Ovary (tissue), 10 donors: ENCODE measurements at regions of chr7 and their contacts with region 1.

Region 1: DNA sequence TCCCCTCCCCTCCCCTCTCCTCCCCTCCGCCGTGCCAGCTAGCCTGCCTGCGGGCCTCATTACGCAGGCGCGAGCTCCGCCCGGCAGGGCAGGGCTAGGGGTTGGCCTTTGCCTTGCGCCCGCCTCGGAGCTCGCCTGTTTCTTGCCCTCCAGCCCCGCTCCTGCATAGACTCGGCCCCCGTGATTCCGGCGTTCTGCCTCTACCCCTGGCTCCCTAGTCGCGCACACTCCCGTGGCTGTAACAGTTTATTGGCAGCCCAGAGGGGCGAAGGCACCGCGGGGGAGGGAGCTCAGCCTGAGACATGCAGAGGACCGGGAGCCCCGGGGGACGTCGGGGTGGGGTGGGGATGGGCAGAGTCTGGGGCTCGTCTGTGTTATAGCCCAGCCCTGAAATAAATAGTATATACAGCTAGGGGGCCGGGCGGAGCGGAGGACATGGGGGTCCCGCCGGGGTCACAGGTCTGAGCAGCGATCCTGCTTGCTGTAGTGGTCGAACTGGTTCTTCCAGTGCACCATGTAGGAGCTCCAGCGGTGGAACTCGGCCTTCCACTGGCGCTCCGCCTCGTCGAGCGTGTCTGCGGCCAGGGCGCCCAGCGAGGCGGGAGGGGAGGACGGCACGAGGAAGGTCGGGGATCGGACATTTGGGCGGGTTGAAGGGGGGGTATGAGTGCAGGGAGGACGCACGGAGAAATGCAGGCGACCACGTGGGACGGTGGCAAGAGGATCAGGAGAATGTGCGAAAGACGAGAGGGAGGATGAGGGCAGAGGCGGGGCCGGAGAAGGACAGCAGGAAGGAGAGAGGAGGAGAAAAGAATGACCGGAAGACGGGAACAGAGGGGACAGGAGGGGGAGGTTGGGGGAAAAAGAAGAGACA is 483 bp upstream of the UFSP1 start:
- DNase-seq: peak; percentile 91 to 94 (median 93)
- H3K4me3 ChIP-seq: peak overlapping the region; percentile 64
- H3K27ac ChIP-seq: peak overlapping the region; percentile 18 to 67
- H3K4me1 ChIP-seq: peaks cover 4% of the 10 kb centered on the region
- H3K27me3 ChIP-seq: no peaks in the 10 kb centered on the region
- CTCF ChIP-seq: peak in 1 of 3 donors; percentile 21
- EP300 ChIP-seq: no peak
- POLR2A ChIP-seq: peak; percentile 58

Region 2: DNA sequence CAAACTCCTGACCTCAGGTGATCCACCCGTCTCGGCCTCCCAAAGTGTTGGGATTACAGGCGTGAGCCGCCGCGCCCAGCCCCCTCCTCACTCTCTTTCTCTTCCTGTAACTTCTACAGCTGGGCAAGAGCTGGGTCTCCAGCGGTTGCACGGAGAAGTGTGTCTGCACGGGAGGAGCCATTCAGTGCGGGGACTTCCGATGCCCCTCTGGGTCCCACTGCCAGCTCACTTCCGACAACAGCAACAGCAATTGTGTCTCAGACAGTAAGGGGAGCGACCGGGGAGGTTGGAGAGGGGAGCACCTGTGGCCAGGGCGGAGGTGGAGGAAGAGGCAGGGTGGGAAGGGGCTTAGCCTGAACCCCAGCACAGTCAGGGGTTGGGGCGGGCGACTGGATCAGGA is 104.1 kb before region 1 on chr7:
- intact Hi-C with region 1: no loop called
- DNase-seq: no peak
- H3K4me3 ChIP-seq: no peak overlapping the region
- H3K27ac ChIP-seq: no peak overlapping the region
- H3K4me1 ChIP-seq: no peaks in the 10 kb centered on the region
- H3K27me3 ChIP-seq: no peaks in the 10 kb centered on the region
- CTCF ChIP-seq: no peak
- EP300 ChIP-seq: no peak
- POLR2A ChIP-seq: no peak

Region 3: GRCh38 chr7:100929780-100930135 is 39.8 kb after region 1 on chr7:
- intact Hi-C with region 1: no loop called
- DNase-seq: no peak
- H3K4me3 ChIP-seq: no peak overlapping the region
- H3K27ac ChIP-seq: no peak overlapping the region
- H3K4me1 ChIP-seq: no peaks in the 10 kb centered on the region
- H3K27me3 ChIP-seq: no peaks in the 10 kb centered on the region
- CTCF ChIP-seq: no peak
- EP300 ChIP-seq: no peak
- POLR2A ChIP-seq: no peak

Region 4: GRCh38 chr7:101058355-101058754 is 168.4 kb after region 1 on chr7:
- intact Hi-C with region 1: loop called in 2 of 4 experiments (anchors 5 kb)
- DNase-seq: peak; percentile 48 to 77 (median 73)
- H3K4me3 ChIP-seq: no peak overlapping the region
- H3K27ac ChIP-seq: no peak overlapping the region
- H3K4me1 ChIP-seq: no peaks in the 10 kb centered on the region
- H3K27me3 ChIP-seq: no peaks in the 10 kb centered on the region
- CTCF ChIP-seq: no peak
- EP300 ChIP-seq: no peak
- POLR2A ChIP-seq: no peak

Region 5: DNA sequence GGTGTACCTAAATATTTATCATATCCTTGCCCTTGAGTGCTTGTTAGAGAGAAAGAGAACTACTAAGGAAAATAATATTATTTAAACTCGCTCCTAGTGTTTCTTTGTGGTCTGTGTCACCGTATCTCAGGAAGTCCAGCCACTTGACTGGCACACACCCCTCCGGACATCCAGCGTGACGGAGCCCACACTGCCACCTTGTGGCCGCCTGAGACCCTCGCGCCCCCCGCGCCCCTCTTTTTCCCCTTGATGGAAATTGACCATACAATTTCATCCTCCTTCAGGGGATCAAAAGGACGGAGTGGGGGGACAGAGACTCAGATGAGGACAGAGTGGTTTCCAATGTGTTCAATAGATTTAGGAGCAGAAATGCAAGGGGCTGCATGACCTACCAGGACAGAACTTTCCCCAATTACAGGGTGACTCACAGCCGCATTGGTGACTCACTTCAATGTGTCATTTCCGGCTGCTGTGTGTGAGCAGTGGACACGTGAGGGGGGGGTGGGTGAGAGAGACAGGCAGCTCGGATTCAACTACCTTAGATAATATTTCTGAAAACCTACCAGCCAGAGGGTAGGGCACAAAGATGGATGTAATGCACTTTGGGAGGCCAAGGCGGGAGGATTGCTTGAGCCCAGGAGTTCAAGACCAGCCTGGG is 248.3 kb after region 1 on chr7:
- intact Hi-C with region 1: loop called in 1 of 4 experiments (anchors 10 kb)
- DNase-seq: peak; percentile 70 to 92 (median 78)
- H3K4me3 ChIP-seq: no peak overlapping the region
- H3K27ac ChIP-seq: peak overlapping the region in 1 of 2 donors; percentile 29
- H3K4me1 ChIP-seq: peaks cover 1% of the 10 kb centered on the region
- H3K27me3 ChIP-seq: no peaks in the 10 kb centered on the region
- CTCF ChIP-seq: peak; percentile 46 to 90 (median 86)
- EP300 ChIP-seq: no peak
- POLR2A ChIP-seq: no peak

Region 6: DNA sequence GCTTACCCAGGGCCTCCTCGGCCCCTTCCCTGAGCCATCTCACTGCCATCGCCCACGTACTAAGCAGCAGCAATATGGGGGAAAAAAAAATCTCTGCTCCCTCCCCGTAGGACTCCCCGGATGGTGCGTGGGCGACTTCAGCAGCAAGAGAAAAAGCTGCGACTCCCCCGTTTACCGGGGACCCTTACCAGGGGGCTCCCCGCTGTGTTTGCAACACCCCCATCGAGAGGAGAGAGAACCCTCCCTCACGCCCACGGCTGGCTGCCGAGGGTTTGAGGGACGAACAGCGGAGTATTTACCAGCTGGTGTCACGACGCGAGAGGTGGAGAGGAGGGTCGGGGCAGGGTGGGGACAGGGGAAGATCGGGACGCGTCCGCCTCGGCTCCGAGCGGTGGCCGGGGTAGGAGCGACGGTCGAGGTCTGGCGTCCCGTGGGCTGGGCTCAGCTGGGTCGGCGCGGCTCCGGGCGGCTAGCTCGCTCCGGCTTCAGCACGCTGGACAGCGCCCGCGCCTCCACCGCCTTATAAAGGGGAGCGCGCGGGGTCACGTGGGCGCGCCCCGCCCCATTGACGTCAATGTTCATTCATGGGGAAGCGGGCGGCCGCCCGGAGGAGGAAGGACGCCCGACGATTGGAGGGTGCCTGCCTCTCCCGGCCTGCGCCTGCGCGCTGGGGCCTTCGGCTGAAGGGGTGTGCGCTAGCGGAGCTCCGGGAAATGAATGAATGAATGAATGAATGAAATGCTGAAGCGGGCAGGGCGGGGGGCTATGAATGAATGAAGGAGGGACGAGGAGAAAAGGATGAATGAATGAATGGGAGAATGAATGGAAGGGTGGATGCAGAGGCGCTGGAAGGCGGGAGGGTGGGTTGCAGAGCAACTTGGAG is 275.3 kb after region 1 on chr7 and contains the start of gene VGF:
- intact Hi-C with region 1: loop called in 1 of 4 experiments (anchors 10 kb)
- DNase-seq: peak; percentile 78 to 93 (median 88)
- H3K4me3 ChIP-seq: no peak within 1 kb of the TSS
- H3K27ac ChIP-seq: no peak within 1 kb of the TSS
- H3K4me1 ChIP-seq: peaks cover 15% of the 10 kb centered on the region
- H3K27me3 ChIP-seq: peaks cover 2% of the 10 kb centered on the region
- CTCF ChIP-seq: no peak
- EP300 ChIP-seq: no peak
- POLR2A ChIP-seq: no peak
- total RNA-seq, gene VGF: 0.20 TPM in 1 of 7 donors, not detected in the others

Region 7: GRCh38 chr7:101287032-101287431 is 397.0 kb after region 1 on chr7:
- intact Hi-C with region 1: loop called in 2 of 4 experiments (anchors 10 kb)
- DNase-seq: no peak
- H3K4me3 ChIP-seq: no peak overlapping the region
- H3K27ac ChIP-seq: no peak overlapping the region
- H3K4me1 ChIP-seq: peaks cover 2% of the 10 kb centered on the region
- H3K27me3 ChIP-seq: no peaks in the 10 kb centered on the region
- CTCF ChIP-seq: no peak
- EP300 ChIP-seq: no peak
- POLR2A ChIP-seq: no peak

Region 8: DNA sequence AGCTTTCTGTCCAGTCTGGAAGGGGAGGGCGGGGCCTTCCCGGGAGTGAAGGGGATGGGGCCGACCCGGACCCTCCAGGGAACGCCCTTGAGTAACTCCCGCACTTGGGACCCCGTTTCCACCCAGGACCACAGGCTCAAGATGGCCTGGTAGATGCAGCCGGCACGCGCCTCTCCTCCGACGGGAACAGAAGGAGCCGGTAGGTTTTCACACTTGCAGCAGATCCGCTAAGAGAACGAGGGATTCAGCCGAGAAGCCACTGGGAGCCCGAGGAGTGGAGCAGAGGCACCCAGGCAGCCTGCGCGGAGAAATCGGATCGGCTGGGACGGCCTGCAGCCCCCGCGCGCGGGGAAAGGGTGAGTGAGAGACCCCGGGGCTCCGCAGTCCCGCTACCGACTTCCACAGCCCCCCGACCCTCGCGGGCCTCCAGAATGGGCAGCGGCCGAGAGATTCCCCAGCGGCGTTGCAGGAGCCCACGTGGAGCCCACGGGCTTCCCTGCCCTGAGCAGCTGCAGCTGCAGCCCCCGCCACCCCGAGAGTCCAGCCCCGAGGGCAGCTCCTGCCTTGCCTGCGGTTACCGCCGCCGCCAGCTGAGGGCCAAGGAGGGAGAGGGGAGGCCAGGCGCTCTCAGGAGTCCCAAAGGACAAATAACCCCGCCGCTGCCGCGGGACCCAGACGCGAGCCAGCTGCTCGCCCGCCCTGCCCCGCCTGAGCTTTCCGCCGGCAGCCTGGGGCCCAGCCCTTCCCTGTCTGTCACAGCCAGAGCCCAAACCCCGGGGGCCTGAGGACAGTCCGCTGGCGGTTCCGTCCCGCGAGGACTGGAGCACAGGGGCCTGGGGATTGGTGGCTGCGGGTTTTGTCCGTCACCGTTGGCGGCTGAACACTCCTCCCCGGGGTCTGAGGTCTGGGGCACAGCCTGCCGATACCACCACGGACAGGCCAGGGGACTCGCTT is 409.8 kb after region 1 on chr7:
- intact Hi-C with region 1: loop called in 1 of 4 experiments (anchors 10 kb)
- DNase-seq: no peak
- H3K4me3 ChIP-seq: no peak overlapping the region
- H3K27ac ChIP-seq: no peak overlapping the region
- H3K4me1 ChIP-seq: no peaks in the 10 kb centered on the region
- H3K27me3 ChIP-seq: peaks cover 5% of the 10 kb centered on the region
- CTCF ChIP-seq: no peak
- EP300 ChIP-seq: no peak
- POLR2A ChIP-seq: no peak

Region 9: GRCh38 chr7:101519324-101520023 is 629.5 kb after region 1 on chr7:
- intact Hi-C with region 1: no loop called
- DNase-seq: no peak
- H3K4me3 ChIP-seq: no peak overlapping the region
- H3K27ac ChIP-seq: no peak overlapping the region
- H3K4me1 ChIP-seq: no peaks in the 10 kb centered on the region
- H3K27me3 ChIP-seq: no peaks in the 10 kb centered on the region
- CTCF ChIP-seq: no peak
- EP300 ChIP-seq: no peak
- POLR2A ChIP-seq: no peak